HepG2 (cell line): ENCODE measurements at regions of chr10 and their contacts with region 1.

Region 1: GRCh38 chr10:103367782-103368518 is at the start of gene TAF5:
- DNase-seq: peak; percentile 94
- ATAC-seq: peak; percentile 81
- H3K4me3 ChIP-seq: peak within 1 kb of the TSS; percentile 82 to 97 (median 95)
- H3K27ac ChIP-seq: peak within 1 kb of the TSS; percentile 73
- H3K4me1 ChIP-seq: peaks cover 25% of the 10 kb centered on the region
- H3K27me3 ChIP-seq: no peaks in the 10 kb centered on the region; a peak in 1 of 5 replicates
- CTCF ChIP-seq: peak; percentile 25; the same call in 1 of the 2 replicates
- EP300 ChIP-seq: no peak; a peak in 1 of 4 replicates
- POLR2A ChIP-seq: peak; percentile 87 to 91
- RAD21 ChIP-seq: no peak
- total RNA-seq, gene TAF5: 8.7 and 13.6 TPM in 2 replicates

Region 2: DNA sequence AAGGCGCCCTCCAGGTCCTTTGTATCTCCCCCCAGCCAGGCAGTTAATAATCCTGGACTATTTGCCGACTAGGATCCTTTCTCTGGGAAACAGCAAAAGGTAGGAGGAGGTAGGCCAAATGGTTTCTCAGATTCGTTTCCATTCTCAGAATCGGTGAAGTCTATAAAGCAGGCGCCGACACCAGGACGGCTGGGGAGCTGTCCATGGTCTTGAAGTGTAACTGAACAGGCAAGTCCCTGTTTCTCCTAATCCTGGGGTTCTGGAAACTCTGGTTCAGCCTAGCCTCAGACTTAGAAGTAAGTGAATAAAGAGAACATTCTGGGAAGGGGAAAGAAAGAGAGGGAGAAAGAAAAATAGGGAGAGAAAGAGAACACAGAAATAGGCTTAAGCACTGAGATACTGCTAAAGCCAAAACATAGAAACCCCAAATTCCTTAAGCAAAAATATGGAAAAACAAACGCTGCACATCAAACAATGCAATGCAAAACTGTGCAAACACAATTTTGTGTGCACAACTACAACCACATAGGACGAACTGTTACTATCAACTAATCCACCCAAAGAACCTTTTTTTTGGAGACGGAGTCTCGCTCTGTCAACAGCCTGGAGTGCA is 102.1 kb before region 1 on chr10:
- CTCF ChIA-PET with region 1: no interaction called
- POLR2A ChIA-PET with region 1: no interaction called
- in situ Hi-C with region 1: no loop called
- intact Hi-C with region 1: no loop called
- DNase-seq: peak; percentile 63
- ATAC-seq: peak; percentile 74
- H3K4me3 ChIP-seq: no peak overlapping the region
- H3K27ac ChIP-seq: no peak overlapping the region
- H3K4me1 ChIP-seq: peaks cover 5% of the 10 kb centered on the region; the same call in 1 of the 2 replicates
- H3K27me3 ChIP-seq: no peaks in the 10 kb centered on the region
- CTCF ChIP-seq: no peak
- EP300 ChIP-seq: no peak
- POLR2A ChIP-seq: no peak
- RAD21 ChIP-seq: no peak

Region 3: DNA sequence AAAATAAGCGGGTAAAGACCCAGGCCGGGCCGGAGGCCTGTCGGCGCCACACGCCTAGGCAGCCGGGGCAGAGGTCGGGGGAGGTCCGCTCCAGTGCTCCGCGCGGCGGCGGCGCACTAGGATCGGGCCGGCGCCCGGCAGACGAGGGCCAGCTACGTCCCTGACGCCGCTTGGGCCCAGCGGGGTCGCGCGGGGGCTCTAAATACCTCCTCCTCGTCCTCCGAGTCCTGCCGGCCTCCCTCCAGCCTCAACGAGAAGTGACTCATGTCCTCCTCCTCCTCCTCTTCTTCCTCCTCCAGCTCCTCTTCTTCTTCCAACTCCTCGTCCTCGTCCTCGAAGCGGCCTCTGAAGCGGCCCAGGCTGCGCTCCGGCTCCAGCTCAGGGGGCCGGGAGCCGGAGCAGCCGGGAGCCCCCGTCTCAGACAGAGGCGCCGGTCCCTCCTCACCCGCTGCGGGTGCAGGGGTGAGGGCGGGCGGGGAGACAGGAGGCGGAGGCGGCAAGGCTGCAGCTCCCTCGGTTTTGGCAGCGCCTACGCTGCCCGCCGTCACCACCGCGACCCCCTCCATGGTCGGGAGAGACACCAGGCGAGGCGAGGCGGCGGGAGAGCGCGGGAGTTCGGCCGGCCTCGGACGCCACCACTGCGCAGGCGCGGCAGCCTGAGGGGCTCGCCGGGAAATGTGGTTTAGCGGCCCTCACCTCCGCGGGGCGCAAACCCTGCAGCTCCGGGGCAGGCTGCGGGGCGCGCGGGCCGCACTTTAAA is 17.3 kb before region 1 on chr10 and contains the start of gene PCGF6:
- CTCF ChIA-PET with region 1: no interaction called
- POLR2A ChIA-PET with region 1: interaction called, 18 read pairs
- in situ Hi-C with region 1: no loop called
- intact Hi-C with region 1: no loop called
- DNase-seq: peak; percentile 76
- ATAC-seq: peak; percentile 96
- H3K4me3 ChIP-seq: peak within 1 kb of the TSS; percentile 78 to 85 (median 80)
- H3K27ac ChIP-seq: peak within 1 kb of the TSS; percentile 82
- H3K4me1 ChIP-seq: peaks cover 32% of the 10 kb centered on the region
- H3K27me3 ChIP-seq: no peaks in the 10 kb centered on the region
- CTCF ChIP-seq: no peak; the same call in 1 of the 2 replicates
- EP300 ChIP-seq: no peak
- POLR2A ChIP-seq: peak in 1 of 2 experiments; percentile 74; a peak in 3 of 4 replicates
- RAD21 ChIP-seq: peak; percentile 8; the same call in 1 of the 2 replicates
- total RNA-seq, gene PCGF6: 19.4 and 24.7 TPM in 2 replicates

Region 4: DNA sequence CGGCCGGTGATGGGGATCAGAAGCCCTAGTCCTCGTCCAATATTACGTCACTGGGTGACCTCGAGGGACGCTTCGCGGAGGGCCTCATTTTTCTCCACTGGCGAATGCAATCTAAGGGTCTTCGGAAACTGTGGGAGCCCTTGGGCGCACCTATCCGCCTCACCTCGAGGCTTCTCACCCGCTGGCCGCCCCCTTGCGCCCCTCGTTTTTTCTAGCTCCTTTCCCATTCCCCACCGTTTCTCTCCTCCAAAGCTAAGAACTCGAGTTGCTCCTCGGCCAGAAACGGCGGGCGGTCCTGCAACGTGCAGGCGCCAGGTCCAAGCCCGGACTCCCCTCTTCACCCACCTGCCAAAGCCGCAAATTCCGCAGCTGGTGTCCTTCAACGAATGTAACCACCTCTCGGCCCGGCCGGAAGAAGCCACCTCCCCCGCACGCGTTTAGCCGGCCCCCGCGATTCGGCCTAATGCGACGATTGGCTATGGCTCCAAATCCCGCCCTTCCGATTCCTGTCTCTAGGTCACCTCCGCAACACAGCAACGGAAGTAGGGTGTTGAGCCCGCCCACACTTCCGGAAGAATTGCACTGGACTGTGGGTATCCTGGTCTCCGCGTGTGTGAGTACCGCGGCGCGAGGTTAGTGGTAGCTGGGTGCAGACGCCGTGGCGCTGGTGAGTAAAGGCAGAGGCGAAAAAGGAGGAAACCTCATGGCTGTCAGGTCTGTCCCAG is 28.3 kb after region 1 on chr10 and contains the starts of genes ATP5MK and PDCD11:
- CTCF ChIA-PET with region 1: no interaction called
- POLR2A ChIA-PET with region 1: interaction called, 10 read pairs
- in situ Hi-C with region 1: no loop called
- intact Hi-C with region 1: loop called (anchors 2 kb)
- DNase-seq: peak; percentile 98
- ATAC-seq: peak; percentile 99
- H3K4me3 ChIP-seq: peak within 1 kb of the TSS; percentile 71 to 94 (median 84)
- H3K27ac ChIP-seq: peak within 1 kb of the TSS; percentile 81
- H3K4me1 ChIP-seq: peaks cover 49% of the 10 kb centered on the region
- H3K27me3 ChIP-seq: no peaks in the 10 kb centered on the region; a peak in 1 of 5 replicates
- CTCF ChIP-seq: peak; percentile 60
- EP300 ChIP-seq: no peak
- POLR2A ChIP-seq: peak; percentile 77 to 94
- RAD21 ChIP-seq: peak; percentile 11; the same call in 1 of the 2 replicates
- total RNA-seq, gene ATP5MK: 517 and 673 TPM in 2 replicates
- total RNA-seq, gene PDCD11: 40.3 and 52.8 TPM in 2 replicates